ENCODE measurements at regions of chr20 and their contacts with region 1.

Region 1: DNA sequence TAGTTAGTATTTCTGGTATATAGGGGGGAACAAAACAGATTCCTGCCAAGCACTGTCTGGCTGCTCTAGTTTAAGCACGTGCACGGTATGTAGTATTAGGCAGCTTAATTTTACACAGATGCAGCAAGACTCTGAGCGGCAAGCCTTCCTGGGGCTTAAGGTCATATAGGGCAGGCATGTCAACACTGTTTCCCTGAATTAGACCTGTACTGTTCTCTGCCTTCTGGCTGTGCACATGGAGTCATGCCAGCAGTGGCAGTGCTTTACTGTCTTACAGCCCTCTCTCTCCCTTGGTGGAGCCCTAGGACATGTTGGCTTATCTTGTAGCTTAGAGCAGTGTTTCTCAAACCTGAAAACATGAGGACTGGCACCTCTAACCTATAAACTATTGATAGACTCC is 56.6 kb downstream of the PHF20 start:
- DNase-seq: no peak
- ATAC-seq: peak; percentile 45
- H3K4me3 ChIP-seq: no peak overlapping the region
- H3K27ac ChIP-seq: no peak overlapping the region
- H3K4me1 ChIP-seq: no peaks in the 10 kb centered on the region
- H3K27me3 ChIP-seq: no peaks in the 10 kb centered on the region
- CTCF ChIP-seq: no peak
- EP300 ChIP-seq: no peak
- POLR2A ChIP-seq: no peak
- RAD21 ChIP-seq: no peak

Region 2: DNA sequence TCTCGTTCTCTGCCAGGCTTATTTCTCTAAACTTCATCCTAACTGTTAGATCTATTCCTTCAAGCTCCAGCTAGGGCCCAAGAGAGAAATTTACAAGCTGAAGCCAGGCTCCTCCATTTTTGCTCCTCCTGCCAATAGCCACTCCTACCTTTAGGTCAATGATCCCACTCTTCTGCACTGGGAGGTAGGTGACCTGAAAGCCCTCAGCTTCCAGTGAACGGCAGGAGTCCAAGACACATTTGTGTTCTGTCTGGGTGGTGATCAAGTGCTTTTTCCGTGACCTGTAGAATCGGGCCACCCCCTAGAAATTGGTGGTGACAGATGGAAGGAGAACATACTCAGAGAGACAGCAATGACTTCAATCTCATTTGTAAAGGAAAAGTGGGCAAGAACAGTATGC is 138.2 kb before region 1 on chr20:
- CTCF ChIA-PET with region 1: no interaction called
- POLR2A ChIA-PET with region 1: no interaction called
- in situ Hi-C with region 1: loop called (anchors 5 kb)
- intact Hi-C with region 1: loop called (anchors 2 kb)
- DNase-seq: no peak
- ATAC-seq: no peak
- H3K4me3 ChIP-seq: no peak overlapping the region
- H3K27ac ChIP-seq: no peak overlapping the region
- H3K4me1 ChIP-seq: peaks cover 13% of the 10 kb centered on the region
- H3K27me3 ChIP-seq: no peaks in the 10 kb centered on the region
- CTCF ChIP-seq: no peak
- EP300 ChIP-seq: no peak
- POLR2A ChIP-seq: no peak
- RAD21 ChIP-seq: no peak

Measured in HepG2 (cell line).